Dendritic cell treated with granulocyte-macrophage colony-stimulating factor and Interleukin-4, amounts not matched to agents 40 ng/mL and 50 ng/mL, for 4 days (primary cell): ENCODE measurements at regions of chr1 and their contacts with region 1.

Region 1: GRCh38 chr1:99707535-99708142 is 58.8 kb downstream of the FRRS1 start:
- H3K4me3 Mint-ChIP-seq: no peak overlapping the region
- H3K27ac Mint-ChIP-seq: no peak overlapping the region
- H3K4me1 Mint-ChIP-seq: peaks cover 12% of the 10 kb centered on the region
- H3K27me3 Mint-ChIP-seq: no peaks in the 10 kb centered on the region

Region 2: GRCh38 chr1:98749152-98749756 is 958.4 kb before region 1 on chr1:
- intact Hi-C with region 1: loop called (anchors 5 kb)
- H3K4me3 Mint-ChIP-seq: no peak overlapping the region
- H3K27ac Mint-ChIP-seq: no peak overlapping the region
- H3K4me1 Mint-ChIP-seq: no peaks in the 10 kb centered on the region
- H3K27me3 Mint-ChIP-seq: no peaks in the 10 kb centered on the region

Region 3: GRCh38 chr1:99180343-99180808 is 527.3 kb before region 1 on chr1:
- intact Hi-C with region 1: loop called (anchors 1 kb)
- H3K4me3 Mint-ChIP-seq: no peak overlapping the region
- H3K27ac Mint-ChIP-seq: no peak overlapping the region
- H3K4me1 Mint-ChIP-seq: no peaks in the 10 kb centered on the region
- H3K27me3 Mint-ChIP-seq: peaks cover 1% of the 10 kb centered on the region

Region 4: GRCh38 chr1:99481391-99481996 is 226.1 kb before region 1 on chr1:
- intact Hi-C with region 1: loop called (anchors 5 kb)
- H3K4me3 Mint-ChIP-seq: no peak overlapping the region
- H3K27ac Mint-ChIP-seq: no peak overlapping the region
- H3K4me1 Mint-ChIP-seq: no peaks in the 10 kb centered on the region
- H3K27me3 Mint-ChIP-seq: no peaks in the 10 kb centered on the region

Region 5: GRCh38 chr1:99737016-99737415 is 29.4 kb after region 1 on chr1:
- intact Hi-C with region 1: no loop called
- H3K4me3 Mint-ChIP-seq: no peak overlapping the region
- H3K27ac Mint-ChIP-seq: no peak overlapping the region
- H3K4me1 Mint-ChIP-seq: no peaks in the 10 kb centered on the region
- H3K27me3 Mint-ChIP-seq: no peaks in the 10 kb centered on the region